ENCODE measurements at regions of chr11 and their contacts with region 1.

Region 1: GRCh38 chr11:62678770-62679696 is at the start of gene UBXN1:
- DNase-seq: peak; percentile 80 to 90 (median 82)
- H3K4me3 ChIP-seq: peak within 1 kb of the TSS; percentile 58 to 95
- H3K4me3 Mint-ChIP-seq: peak within 1 kb of the TSS; percentile 87 to 98 (median 92)
- H3K27ac ChIP-seq: peak within 1 kb of the TSS; percentile 98
- H3K27ac Mint-ChIP-seq: peak within 1 kb of the TSS; percentile 86 to 99 (median 95)
- H3K4me1 ChIP-seq: peaks cover 37% of the 10 kb centered on the region
- H3K4me1 Mint-ChIP-seq: peaks cover 16 to 50% (median 31%) of the 10 kb centered on the region in 4 donors
- H3K27me3 ChIP-seq: no peaks in the 10 kb centered on the region
- H3K27me3 Mint-ChIP-seq: no peaks in the 10 kb centered on the region
- total RNA-seq, gene UBXN1: 178 to 185 TPM

Region 2: GRCh38 chr11:62421996-62422395 is 257.0 kb before region 1 on chr11:
- CTCF ChIA-PET with region 1: interaction called, 4 read pairs
- POLR2A ChIA-PET with region 1: interaction called, 8 read pairs
- intact Hi-C with region 1: loop called (anchors 5 kb)
- DNase-seq: no peak
- H3K4me3 ChIP-seq: no peak overlapping the region
- H3K4me3 Mint-ChIP-seq: no peak overlapping the region
- H3K27ac ChIP-seq: no peak overlapping the region
- H3K27ac Mint-ChIP-seq: peak overlapping the region in 1 of 7 donors; percentile 55
- H3K4me1 ChIP-seq: peaks cover 19% of the 10 kb centered on the region
- H3K4me1 Mint-ChIP-seq: peaks cover 10 to 16% (median 14%) of the 10 kb centered on the region in 4 donors
- H3K27me3 ChIP-seq: no peaks in the 10 kb centered on the region
- H3K27me3 Mint-ChIP-seq: no peaks in the 10 kb centered on the region

Region 3: GRCh38 chr11:62694455-62695167 is 15.6 kb after region 1 on chr11:
- CTCF ChIA-PET with region 1: interaction called, 42 read pairs
- POLR2A ChIA-PET with region 1: interaction called, 4 read pairs
- intact Hi-C with region 1: loop called (anchors 2 kb)
- DNase-seq: peak; percentile 73 to 80 (median 74)
- H3K4me3 ChIP-seq: no peak overlapping the region
- H3K4me3 Mint-ChIP-seq: no peak overlapping the region
- H3K27ac ChIP-seq: no peak overlapping the region
- H3K27ac Mint-ChIP-seq: peak overlapping the region in 4 of 7 donors; percentile 7 to 77 (median 56)
- H3K4me1 ChIP-seq: no peaks in the 10 kb centered on the region
- H3K4me1 Mint-ChIP-seq: peaks cover 5 to 7% (median 6%) of the 10 kb centered on the region in 4 donors
- H3K27me3 ChIP-seq: no peaks in the 10 kb centered on the region
- H3K27me3 Mint-ChIP-seq: no peaks in the 10 kb centered on the region

Region 4: GRCh38 chr11:62980133-62980760 is 301.2 kb after region 1 on chr11:
- CTCF ChIA-PET with region 1: no interaction called
- POLR2A ChIA-PET with region 1: no interaction called
- intact Hi-C with region 1: no loop called
- DNase-seq: no peak
- H3K4me3 ChIP-seq: no peak overlapping the region
- H3K4me3 Mint-ChIP-seq: no peak overlapping the region
- H3K27ac ChIP-seq: no peak overlapping the region
- H3K27ac Mint-ChIP-seq: no peak overlapping the region
- H3K4me1 ChIP-seq: no peaks in the 10 kb centered on the region
- H3K4me1 Mint-ChIP-seq: no peaks in the 10 kb centered on the region
- H3K27me3 ChIP-seq: no peaks in the 10 kb centered on the region
- H3K27me3 Mint-ChIP-seq: peaks cover 6 to 25% of the 10 kb centered on the region in 2 donors

Region 5: DNA sequence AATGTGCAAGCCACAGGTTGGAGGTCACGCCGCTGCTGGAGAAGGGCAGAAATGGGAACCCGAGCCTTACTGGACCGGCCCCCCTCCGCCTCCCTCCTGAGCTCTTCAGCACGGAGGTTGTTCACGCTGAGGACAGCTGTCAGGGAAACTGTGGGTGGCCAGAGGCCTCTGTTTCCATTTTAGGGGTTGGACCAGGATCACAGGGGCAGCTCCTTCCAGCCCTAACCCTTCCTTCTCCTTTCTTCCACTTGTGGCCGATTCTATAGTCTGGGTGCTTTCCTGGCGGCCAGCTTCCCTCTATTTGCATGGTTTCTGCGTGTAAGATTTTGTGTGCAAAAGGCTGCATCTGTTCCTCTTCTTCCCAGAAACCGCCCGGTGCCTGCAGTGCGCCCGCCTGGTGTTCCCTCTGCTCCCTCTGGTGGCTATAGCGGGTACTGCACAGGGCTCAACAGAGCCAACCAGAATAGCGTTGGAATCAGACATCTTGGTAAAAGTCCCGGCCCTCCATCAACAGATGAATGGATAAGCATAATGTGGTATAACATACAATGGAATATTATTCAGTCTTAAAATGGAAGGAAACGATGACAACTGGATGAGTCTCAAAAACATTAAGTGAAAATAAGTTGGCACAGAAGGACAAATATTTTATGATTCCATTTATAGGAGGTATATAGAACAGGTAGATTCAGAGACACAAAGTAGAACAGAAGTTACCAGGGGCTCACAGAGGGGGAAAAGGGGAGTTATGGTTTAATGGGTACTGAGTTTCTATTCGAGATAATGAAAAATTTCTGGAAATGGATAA is 345.0 kb after region 1 on chr11:
- CTCF ChIA-PET with region 1: no interaction called
- POLR2A ChIA-PET with region 1: no interaction called
- intact Hi-C with region 1: loop called (anchors 5 kb)
- DNase-seq: peak; percentile 68 to 76 (median 72)
- H3K4me3 ChIP-seq: no peak overlapping the region
- H3K4me3 Mint-ChIP-seq: peak overlapping the region in 2 of 8 donors; percentile 1 to 20
- H3K27ac ChIP-seq: no peak overlapping the region
- H3K27ac Mint-ChIP-seq: no peak overlapping the region
- H3K4me1 ChIP-seq: no peaks in the 10 kb centered on the region
- H3K4me1 Mint-ChIP-seq: peaks cover 0 to 4% (median 2%) of the 10 kb centered on the region in 4 donors
- H3K27me3 ChIP-seq: no peaks in the 10 kb centered on the region
- H3K27me3 Mint-ChIP-seq: peaks cover 8 to 25% of the 10 kb centered on the region in 2 donors

Measured in CD4-positive, alpha-beta memory T cell (primary cell).